Activated CD4-positive, alpha-beta T cell treated with anti-CD3 and anti-CD28 coated beads, Interleukin-2, amount 10 ng/mL, durations not matched to agents 7 days and 5 days (primary cell): ENCODE measurements at regions of chr3 and their contacts with region 1.

Region 1: DNA sequence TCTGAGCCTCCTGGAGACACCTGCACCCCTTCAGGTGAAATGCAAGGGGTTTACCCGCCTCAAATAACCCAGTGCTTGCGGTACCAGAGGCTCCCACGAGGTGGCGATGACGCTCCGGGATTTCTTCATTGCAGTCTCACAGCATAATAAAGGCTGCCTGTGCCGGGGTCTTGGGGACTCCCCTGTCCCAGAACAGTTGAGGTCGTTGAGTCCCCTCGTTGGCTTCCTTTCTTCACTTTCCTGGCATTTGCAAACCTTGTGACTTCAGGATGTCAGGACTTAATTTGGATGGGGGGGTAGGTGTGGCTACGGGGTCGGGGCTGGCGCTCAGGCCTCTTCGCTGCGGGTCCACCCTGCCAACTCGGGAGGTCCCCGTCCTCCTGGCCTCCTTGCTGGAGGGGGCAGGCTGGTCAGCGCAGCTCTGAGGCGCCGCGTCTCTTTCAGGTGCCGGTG is 1.3 kb downstream of the GNAT1 start:
- DNase-seq: peak; percentile 86
- H3K4me3 Mint-ChIP-seq: no peak overlapping the region
- H3K27ac Mint-ChIP-seq: no peak overlapping the region
- H3K4me1 Mint-ChIP-seq: peaks cover 9% of the 10 kb centered on the region
- H3K27me3 Mint-ChIP-seq: peaks cover 14% of the 10 kb centered on the region

Region 2: DNA sequence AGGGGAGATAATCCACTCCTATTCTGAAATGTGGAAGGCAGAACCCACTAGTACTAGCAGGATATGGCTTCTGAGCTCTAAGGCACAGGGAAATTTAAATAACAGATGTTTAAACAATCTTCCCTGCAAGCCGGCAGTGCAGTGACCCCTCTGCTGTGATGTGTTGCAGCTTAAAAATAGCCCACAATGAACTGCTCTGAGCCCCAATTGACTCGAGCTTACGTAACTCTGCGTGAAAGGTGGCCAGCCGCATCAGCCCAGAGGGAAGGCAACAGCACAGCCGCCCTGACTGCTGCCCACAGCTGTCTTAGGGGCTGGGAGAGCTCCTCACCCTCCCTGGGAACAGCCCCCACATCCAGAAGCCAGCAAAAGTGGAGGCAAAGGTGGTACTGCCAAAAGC is 310.5 kb before region 1 on chr3:
- CTCF ChIA-PET with region 1: no interaction called
- POLR2A ChIA-PET with region 1: no interaction called
- DNase-seq: no peak
- H3K4me3 Mint-ChIP-seq: no peak overlapping the region
- H3K27ac Mint-ChIP-seq: no peak overlapping the region
- H3K4me1 Mint-ChIP-seq: no peaks in the 10 kb centered on the region
- H3K27me3 Mint-ChIP-seq: peaks cover 3% of the 10 kb centered on the region

Region 3: DNA sequence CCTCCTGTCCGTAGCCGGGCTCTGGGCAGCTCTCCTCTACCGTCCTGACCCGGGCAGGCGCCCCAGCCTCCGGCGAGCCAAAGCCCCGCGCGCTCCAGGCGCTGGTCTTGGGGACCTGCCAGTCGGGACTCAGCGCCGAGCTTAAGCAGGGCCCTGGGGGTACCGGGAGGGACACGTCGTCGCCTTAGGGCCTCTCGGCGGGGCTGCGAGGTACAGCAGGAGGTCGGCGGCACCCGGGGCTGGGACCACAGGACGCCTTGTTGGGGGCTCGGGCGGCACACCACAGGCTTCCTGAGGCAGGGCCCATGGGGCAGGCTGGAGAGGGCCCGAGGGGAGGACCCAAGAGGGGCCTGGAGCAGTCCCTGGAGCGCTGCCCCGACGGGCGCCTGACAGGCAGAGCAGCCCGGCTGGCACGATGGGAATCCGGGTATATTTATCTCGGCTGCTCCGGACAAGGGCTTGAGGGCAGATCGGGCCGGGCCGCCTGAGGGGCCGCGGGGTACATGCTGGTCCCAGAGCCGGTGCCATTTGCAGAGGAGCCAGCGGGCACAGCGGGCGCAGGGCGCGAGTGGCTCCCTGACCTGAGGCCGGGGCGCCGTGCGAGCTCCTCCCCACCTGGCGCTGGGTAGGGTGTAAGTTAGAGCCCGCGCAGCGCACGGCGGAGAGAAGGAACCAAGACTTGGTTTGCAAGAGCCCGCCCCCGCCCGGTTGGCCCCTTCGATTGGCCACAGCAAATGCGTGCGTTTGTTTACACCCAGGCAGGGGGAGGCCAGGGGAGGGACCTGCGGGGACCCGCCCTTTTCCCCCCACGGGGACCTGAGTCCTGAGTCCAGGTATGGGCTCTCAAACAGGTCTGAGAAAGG is 12.9 kb after region 1 on chr3:
- CTCF ChIA-PET with region 1: interaction called, 23 read pairs
- POLR2A ChIA-PET with region 1: no interaction called
- DNase-seq: peak; percentile 42
- H3K4me3 Mint-ChIP-seq: no peak overlapping the region
- H3K27ac Mint-ChIP-seq: no peak overlapping the region
- H3K4me1 Mint-ChIP-seq: peaks cover 2% of the 10 kb centered on the region
- H3K27me3 Mint-ChIP-seq: peaks cover 48% of the 10 kb centered on the region

Region 4: GRCh38 chr3:50211930-50212329 is 19.2 kb after region 1 on chr3:
- CTCF ChIA-PET with region 1: interaction called, 175 read pairs
- POLR2A ChIA-PET with region 1: no interaction called
- DNase-seq: no peak
- H3K4me3 Mint-ChIP-seq: no peak overlapping the region
- H3K27ac Mint-ChIP-seq: no peak overlapping the region
- H3K4me1 Mint-ChIP-seq: no peaks in the 10 kb centered on the region
- H3K27me3 Mint-ChIP-seq: peaks cover 10% of the 10 kb centered on the region

Region 5: DNA sequence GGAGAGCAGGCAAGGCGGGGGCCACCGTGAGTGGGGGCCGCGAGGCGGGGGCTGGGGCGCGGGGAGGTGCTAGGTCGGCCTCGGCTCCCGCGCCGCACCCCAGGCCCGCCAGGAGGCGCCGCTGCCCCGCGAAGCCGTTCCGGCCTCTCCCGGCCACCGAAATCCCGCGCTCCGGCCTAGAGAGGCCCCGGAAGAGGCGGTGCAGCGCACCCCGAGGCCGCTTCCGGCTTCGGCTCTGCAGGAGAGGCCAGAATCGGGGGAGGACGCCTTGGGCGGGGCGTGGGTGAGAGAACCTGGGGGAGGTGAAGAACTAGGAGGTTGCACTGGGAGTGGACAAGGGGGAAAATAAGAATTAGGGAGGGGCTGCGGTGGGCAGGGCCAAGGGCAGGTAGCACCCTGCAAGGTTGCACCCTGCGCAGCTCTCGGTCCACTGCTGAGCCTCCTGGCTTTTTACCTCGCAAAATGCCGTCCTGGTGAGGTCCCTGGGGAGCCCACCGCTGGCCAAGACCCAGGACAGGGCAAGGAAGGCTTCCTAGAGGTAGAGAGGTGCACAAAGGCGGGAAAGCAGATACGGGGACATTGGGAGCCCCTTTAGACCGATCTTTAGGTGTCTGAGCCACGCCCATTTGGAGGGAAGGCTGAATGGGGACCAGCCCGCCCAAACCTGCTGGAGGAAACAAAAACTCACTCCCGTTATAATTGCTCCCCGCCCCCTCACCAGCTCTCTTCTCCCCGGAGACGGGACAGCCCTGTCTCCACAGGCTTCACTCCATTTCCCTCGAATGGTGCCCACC is 34.9 kb after region 1 on chr3:
- CTCF ChIA-PET with region 1: interaction called, 175 read pairs
- POLR2A ChIA-PET with region 1: no interaction called
- DNase-seq: peak; percentile 93
- H3K4me3 Mint-ChIP-seq: peak overlapping the region; percentile 82
- H3K27ac Mint-ChIP-seq: peak overlapping the region; percentile 91
- H3K4me1 Mint-ChIP-seq: peaks cover 35% of the 10 kb centered on the region
- H3K27me3 Mint-ChIP-seq: peaks cover 10% of the 10 kb centered on the region

Region 6: GRCh38 chr3:50235716-50236496 is 43.2 kb after region 1 on chr3 and contains the start of gene GNAI2:
- CTCF ChIA-PET with region 1: interaction called, 175 read pairs
- POLR2A ChIA-PET with region 1: no interaction called
- DNase-seq: peak; percentile 99
- H3K4me3 Mint-ChIP-seq: peak within 1 kb of the TSS; percentile 93
- H3K27ac Mint-ChIP-seq: peak within 1 kb of the TSS; percentile 97
- H3K4me1 Mint-ChIP-seq: peaks cover 42% of the 10 kb centered on the region
- H3K27me3 Mint-ChIP-seq: no peaks in the 10 kb centered on the region
- total RNA-seq, gene GNAI2: 489 to 524 TPM

Region 7: GRCh38 chr3:50245831-50246516 is 53.3 kb after region 1 on chr3:
- CTCF ChIA-PET with region 1: interaction called, 18 read pairs
- POLR2A ChIA-PET with region 1: no interaction called
- DNase-seq: peak; percentile 95
- H3K4me3 Mint-ChIP-seq: peak overlapping the region; percentile 75
- H3K27ac Mint-ChIP-seq: peak overlapping the region; percentile 93
- H3K4me1 Mint-ChIP-seq: peaks cover 74% of the 10 kb centered on the region
- H3K27me3 Mint-ChIP-seq: no peaks in the 10 kb centered on the region

Region 8: DNA sequence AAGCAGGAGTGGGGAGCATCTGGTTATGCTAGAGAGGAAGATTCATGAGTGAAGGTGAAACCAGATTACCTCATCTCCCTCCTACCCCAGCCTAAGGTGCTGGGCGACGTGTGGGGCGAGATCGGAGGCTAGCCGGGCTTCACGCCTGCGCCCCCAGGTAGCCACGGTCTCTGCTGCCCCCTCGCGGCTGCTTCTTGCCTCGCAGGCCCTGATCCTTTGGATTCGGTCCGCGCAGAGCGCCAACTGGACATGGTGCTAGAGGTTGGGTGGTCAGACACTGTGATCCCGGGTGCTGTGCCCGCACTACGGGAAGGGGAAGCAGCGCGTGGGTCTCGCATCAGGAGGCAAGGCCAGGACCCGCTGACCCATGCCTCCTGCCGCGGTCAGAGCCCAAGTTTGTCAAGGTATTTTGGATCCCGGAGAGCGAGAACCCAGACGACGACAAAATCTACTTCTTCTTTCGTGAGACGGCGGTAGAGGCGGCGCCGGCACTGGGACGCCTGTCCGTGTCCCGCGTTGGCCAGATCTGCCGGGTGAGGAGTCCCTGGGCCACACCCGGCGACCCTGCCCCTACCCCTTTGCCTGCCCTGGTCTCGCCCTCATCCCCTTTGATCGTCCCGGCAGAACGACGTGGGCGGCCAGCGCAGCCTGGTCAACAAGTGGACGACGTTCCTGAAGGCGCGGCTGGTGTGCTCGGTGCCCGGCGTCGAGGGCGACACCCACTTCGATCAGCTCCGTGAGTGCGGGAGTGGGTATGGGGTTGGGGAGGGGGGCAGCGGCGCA is 80.4 kb after region 1 on chr3:
- CTCF ChIA-PET with region 1: interaction called, 23 read pairs
- POLR2A ChIA-PET with region 1: interaction called, 6 read pairs
- DNase-seq: peak; percentile 87
- H3K4me3 Mint-ChIP-seq: peak overlapping the region; percentile 54
- H3K27ac Mint-ChIP-seq: peak overlapping the region; percentile 26
- H3K4me1 Mint-ChIP-seq: peaks cover 35% of the 10 kb centered on the region
- H3K27me3 Mint-ChIP-seq: peaks cover 44% of the 10 kb centered on the region